ENCODE measurements at regions of chr5 and their contacts with region 1.

Region 1: GRCh38 chr5:108919591-108920326 is 172.1 kb downstream of the FER start:
- DNase-seq: no peak
- H3K4me3 Mint-ChIP-seq: no peak overlapping the region
- H3K27ac Mint-ChIP-seq: no peak overlapping the region
- H3K4me1 Mint-ChIP-seq: no peaks in the 10 kb centered on the region
- H3K27me3 Mint-ChIP-seq: no peaks in the 10 kb centered on the region
- CTCF ChIP-seq: peak; percentile 32

Region 2: GRCh38 chr5:108715408-108715807 is 204.4 kb before region 1 on chr5:
- CTCF ChIA-PET with region 1: no interaction called
- POLR2A ChIA-PET with region 1: no interaction called
- intact Hi-C with region 1: no loop called
- DNase-seq: no peak
- H3K4me3 Mint-ChIP-seq: no peak overlapping the region
- H3K27ac Mint-ChIP-seq: no peak overlapping the region
- H3K4me1 Mint-ChIP-seq: peaks cover 4% of the 10 kb centered on the region
- H3K27me3 Mint-ChIP-seq: no peaks in the 10 kb centered on the region
- CTCF ChIP-seq: no peak

Region 3: DNA sequence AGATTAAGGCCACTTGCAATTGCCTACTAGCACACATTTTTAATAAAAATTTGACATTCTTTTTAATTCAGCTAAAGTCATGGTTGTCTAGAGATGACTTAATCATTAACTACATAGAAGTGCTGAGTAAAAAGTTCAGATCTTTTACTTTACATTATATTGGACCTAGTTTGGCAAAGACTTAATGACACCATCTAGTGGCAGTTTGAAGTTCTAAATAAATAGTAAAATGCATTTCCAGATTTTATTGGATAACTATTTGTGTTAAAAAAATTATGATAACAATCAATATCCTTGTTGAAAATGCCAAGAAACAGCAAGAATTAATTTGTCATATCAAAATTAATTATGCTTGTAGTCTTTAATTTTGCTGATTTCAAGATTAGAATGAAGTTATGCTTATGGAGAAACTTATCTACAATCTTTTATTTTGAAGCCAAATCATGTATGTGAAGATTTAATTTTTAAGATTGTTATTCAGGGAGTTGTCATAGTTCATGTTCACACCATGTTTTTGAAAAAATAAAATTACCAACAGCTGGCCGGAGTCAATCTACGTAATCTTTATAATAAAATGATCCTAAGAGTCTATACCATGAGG is 559.6 kb after region 1 on chr5:
- CTCF ChIA-PET with region 1: no interaction called
- POLR2A ChIA-PET with region 1: no interaction called
- intact Hi-C with region 1: loop called (anchors 10 kb)
- DNase-seq: peak; percentile 23
- H3K4me3 Mint-ChIP-seq: no peak overlapping the region
- H3K27ac Mint-ChIP-seq: no peak overlapping the region
- H3K4me1 Mint-ChIP-seq: no peaks in the 10 kb centered on the region
- H3K27me3 Mint-ChIP-seq: no peaks in the 10 kb centered on the region
- CTCF ChIP-seq: peak; percentile 28